ENCODE measurements at regions of chr1 and their contacts with region 1.

Region 1: GRCh38 chr1:155001675-155002463 is 733 bp upstream of the ZBTB7B start:
- DNase-seq: peak; percentile 98
- H3K4me3 Mint-ChIP-seq: peak overlapping the region; percentile 98
- H3K27ac Mint-ChIP-seq: peak overlapping the region; percentile 97
- H3K4me1 Mint-ChIP-seq: peaks cover 55% of the 10 kb centered on the region
- H3K27me3 Mint-ChIP-seq: peaks cover 2% of the 10 kb centered on the region

Region 2: DNA sequence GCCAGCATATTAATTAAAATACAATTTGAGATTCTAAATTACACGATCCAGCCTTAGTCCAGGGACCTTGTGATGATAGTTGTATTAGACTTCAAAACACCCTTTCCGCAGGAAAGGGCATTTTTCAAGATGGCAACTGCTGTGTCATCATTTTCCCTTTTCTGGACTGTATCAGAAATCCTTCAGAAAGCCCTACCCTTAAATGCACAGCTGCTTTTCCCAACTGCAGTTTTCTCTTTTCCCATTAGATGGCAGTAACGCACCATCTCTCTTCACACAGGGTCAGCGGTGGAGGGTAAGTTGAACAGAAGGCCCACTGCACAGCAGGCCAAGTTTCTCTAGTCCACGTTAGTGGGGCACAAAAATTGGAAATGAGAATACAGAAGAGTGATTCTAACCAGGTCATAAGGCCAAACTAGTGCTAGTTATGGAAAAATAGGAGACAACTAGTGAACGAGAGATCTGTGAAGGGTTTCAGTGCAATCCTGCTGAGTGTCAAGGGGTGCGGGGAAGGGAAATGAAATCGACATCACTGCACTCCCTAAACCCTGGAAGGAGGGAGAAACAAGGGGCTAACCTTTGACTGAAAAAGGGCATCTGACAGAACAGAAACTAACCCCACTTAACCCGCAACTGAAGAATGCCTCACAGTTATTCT is 522.0 kb before region 1 on chr1:
- intact Hi-C with region 1: loop called (anchors 5 kb)
- DNase-seq: peak; percentile 59
- H3K4me3 Mint-ChIP-seq: no peak overlapping the region
- H3K27ac Mint-ChIP-seq: no peak overlapping the region
- H3K4me1 Mint-ChIP-seq: peaks cover 14% of the 10 kb centered on the region
- H3K27me3 Mint-ChIP-seq: peaks cover 7% of the 10 kb centered on the region

Region 3: DNA sequence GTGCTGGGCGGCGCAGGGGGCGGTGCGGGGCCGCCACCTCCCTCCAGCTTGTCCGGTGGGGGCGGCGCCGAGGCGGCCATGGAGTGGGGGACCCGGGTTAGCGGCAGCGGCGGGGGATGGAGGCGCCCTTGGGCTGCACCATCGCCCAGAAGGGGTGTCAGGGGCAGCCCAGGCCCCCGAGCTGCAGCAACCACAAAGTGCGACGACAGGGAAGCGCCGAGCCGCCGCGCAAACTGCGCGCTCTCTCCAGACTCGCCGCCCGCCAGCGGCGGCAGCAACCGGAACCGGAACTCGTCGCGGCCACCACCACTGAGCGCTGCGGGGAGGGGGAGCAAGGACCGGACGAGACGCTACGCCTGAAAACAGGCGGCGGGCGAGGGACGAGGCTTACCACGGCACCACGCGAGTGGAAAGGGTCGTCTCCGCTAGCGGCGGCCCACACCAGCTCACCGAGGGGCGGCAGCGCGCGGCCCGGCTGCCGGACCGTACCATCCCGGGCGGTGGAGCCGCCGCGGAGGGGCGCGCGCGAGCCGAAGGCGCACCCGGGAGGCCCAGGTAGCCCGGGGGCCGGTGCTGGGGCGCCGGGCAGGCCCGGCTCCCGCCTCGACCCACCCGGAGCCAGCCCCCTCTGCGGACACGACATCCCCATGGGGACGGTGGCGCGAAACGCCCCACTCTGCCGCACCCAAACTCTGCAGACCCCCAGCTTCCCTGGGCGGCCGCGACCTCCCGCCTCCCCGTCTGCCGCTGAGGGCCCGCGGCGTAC is 40.2 kb before region 1 on chr1 and contains the start of gene PYGO2:
- intact Hi-C with region 1: loop called (anchors 1 kb)
- DNase-seq: peak; percentile 82
- H3K4me3 Mint-ChIP-seq: peak within 1 kb of the TSS; percentile 96
- H3K27ac Mint-ChIP-seq: peak within 1 kb of the TSS; percentile 93
- H3K4me1 Mint-ChIP-seq: peaks cover 36% of the 10 kb centered on the region
- H3K27me3 Mint-ChIP-seq: peaks cover 2% of the 10 kb centered on the region
- total RNA-seq, gene PYGO2: 34.7 and 35.0 TPM in 2 replicates

Region 4: GRCh38 chr1:155012026-155012546 is 10.2 kb after region 1 on chr1:
- intact Hi-C with region 1: loop called (anchors 1 kb)
- DNase-seq: no peak
- H3K4me3 Mint-ChIP-seq: peak overlapping the region; percentile 85
- H3K27ac Mint-ChIP-seq: peak overlapping the region; percentile 90
- H3K4me1 Mint-ChIP-seq: peaks cover 55% of the 10 kb centered on the region
- H3K27me3 Mint-ChIP-seq: no peaks in the 10 kb centered on the region

Region 5: DNA sequence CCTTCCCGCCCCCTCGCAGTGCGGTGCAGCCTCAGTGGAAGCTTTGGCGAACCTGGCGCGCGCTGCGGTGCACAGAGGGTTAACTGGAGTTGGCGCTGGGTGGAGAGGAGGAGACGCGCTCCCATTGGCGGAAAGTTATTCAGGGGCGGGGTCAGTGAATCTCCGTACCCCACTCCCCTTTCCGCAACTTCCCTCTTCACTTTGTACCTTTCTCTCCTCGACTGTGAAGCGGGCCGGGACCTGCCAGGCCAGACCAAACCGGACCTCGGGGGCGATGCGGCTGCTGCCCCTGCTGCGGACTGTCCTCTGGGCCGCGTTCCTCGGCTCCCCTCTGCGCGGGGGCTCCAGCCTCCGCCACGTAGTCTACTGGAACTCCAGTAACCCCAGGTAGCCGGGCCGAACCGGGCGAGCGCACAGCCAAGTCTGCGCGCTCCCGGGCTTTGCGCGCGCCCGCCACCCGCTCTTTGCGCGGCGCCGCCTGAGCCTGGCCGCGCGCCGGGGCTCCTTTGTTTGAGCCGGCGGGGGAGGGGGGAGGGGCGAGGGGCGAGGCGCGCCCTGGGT is 61.8 kb after region 1 on chr1 and contains the start of gene EFNA4:
- intact Hi-C with region 1: loop called (anchors 1 kb)
- DNase-seq: peak; percentile 83
- H3K4me3 Mint-ChIP-seq: peak within 1 kb of the TSS; percentile 93
- H3K27ac Mint-ChIP-seq: peak within 1 kb of the TSS; percentile 79
- H3K4me1 Mint-ChIP-seq: peaks cover 31% of the 10 kb centered on the region
- H3K27me3 Mint-ChIP-seq: no peaks in the 10 kb centered on the region
- total RNA-seq, gene EFNA4: 5.7 and 6.8 TPM in 2 replicates

Region 6: DNA sequence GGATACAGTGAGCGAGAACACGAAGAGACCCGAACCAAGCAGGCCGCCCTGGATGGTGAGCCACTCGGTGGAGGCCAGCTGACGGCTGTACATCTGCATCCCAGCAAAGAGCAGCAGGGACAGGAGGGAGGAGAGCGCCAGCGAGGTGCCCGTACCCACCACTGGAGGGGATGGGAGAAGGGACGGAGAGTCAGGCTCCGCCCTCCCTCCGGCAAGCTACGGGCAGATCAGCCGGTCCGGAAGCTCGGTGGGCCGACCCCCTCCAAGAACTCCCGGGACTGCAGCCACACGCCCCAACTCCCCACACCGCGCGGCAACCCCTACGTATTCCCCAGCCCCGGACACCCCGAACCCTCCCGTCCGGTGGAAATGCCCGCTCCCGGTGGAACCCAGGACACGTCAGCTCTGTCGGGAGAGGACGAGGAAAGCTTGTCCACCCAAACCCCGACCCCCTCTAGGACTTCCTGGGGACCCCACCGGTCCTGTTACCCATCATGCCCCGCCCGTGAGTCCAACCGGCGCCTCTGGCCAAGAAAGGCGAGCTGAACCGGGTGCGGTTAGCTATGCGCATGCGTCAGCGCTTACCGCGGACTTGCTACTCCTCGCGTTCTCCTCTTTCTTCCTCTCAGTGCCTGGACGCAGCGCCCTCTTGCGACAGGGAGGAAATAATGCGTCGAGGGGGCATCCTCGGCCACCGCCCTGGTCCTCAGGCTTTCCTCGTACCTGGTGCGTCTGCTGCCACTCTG is 171.0 kb after region 1 on chr1 and contains the start of gene KRTCAP2:
- intact Hi-C with region 1: loop called (anchors 5 kb)
- DNase-seq: peak; percentile 94
- H3K4me3 Mint-ChIP-seq: peak within 1 kb of the TSS; percentile 96
- H3K27ac Mint-ChIP-seq: peak within 1 kb of the TSS; percentile 97
- H3K4me1 Mint-ChIP-seq: peaks cover 49% of the 10 kb centered on the region
- H3K27me3 Mint-ChIP-seq: no peaks in the 10 kb centered on the region
- total RNA-seq, gene KRTCAP2: 230 and 238 TPM in 2 replicates

Measured in activated T-helper 1 cell treated with anti-CD3 and anti-CD28 coated beads, Interleukin-12 subunit alpha, Interleukin-12 subunit beta, Interleukin-2, Interleukin-4 antibody, amounts not matched to agents 30 ng/mL and 10 ng/mL and 1 ng/mL, durations not matched to agents 14 hours and 24 hours and 36 hours (primary cell).